Activated CD4-positive, alpha-beta memory T cell treated with anti-CD3 and anti-CD28 coated beads for 36 hours (primary cell): ENCODE measurements at regions of chr4 and their contacts with region 1.

Region 1: GRCh38 chr4:144174401-144175067 is 34.0 kb upstream of the GYPA start:
- DNase-seq: peak; percentile 40
- H3K4me3 Mint-ChIP-seq: no peak overlapping the region
- H3K27ac Mint-ChIP-seq: peak overlapping the region; percentile 70
- H3K4me1 Mint-ChIP-seq: peaks cover 18% of the 10 kb centered on the region
- H3K27me3 Mint-ChIP-seq: peaks cover 3% of the 10 kb centered on the region

Region 2: DNA sequence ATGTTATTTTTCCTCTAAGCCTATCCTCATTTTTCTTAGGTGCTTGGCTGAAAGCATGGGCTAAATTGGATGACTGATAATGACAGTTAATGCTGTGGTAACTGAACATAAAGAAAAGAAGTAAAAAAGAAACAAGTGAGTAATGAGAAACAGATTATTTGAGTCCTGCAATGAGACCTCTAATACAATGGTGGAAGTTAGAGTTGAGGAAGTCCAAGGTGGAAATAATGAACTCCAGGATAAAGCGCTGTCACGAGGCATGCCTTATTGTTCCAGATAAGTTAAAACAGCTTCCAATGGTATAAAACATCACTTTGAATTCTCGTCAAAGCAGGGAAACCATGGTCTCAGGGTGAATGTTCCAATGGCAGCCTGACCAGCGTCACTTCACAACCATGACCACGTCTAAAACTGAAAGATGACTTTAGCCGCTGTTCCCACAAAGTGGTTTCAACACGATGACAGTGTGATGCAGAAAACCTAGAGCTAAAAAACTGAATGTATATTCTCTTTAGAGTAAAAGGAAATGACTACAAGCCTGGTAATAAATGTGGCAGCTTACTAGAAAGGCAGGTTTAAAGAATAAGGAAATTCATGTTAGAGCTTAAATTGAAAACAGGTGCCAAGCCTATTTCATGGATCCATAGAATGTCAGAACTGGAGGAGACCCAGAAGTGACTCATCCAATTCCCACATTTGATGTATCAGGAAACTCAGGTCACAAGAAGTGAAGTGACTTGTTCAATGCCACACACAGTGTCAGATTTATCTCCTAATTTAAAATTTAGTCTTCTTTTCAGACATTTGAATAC is 168.6 kb after region 1 on chr4:
- CTCF ChIA-PET with region 1: no interaction called
- POLR2A ChIA-PET with region 1: no interaction called
- intact Hi-C with region 1: no loop called
- DNase-seq: no peak
- H3K4me3 Mint-ChIP-seq: no peak overlapping the region
- H3K27ac Mint-ChIP-seq: no peak overlapping the region
- H3K4me1 Mint-ChIP-seq: no peaks in the 10 kb centered on the region
- H3K27me3 Mint-ChIP-seq: no peaks in the 10 kb centered on the region

Region 3: GRCh38 chr4:144355809-144356757 is 181.5 kb after region 1 on chr4:
- CTCF ChIA-PET with region 1: no interaction called
- POLR2A ChIA-PET with region 1: no interaction called
- intact Hi-C with region 1: loop called (anchors 10 kb)
- DNase-seq: peak; percentile 15
- H3K4me3 Mint-ChIP-seq: no peak overlapping the region
- H3K27ac Mint-ChIP-seq: no peak overlapping the region
- H3K4me1 Mint-ChIP-seq: no peaks in the 10 kb centered on the region
- H3K27me3 Mint-ChIP-seq: peaks cover 2% of the 10 kb centered on the region

Region 4: DNA sequence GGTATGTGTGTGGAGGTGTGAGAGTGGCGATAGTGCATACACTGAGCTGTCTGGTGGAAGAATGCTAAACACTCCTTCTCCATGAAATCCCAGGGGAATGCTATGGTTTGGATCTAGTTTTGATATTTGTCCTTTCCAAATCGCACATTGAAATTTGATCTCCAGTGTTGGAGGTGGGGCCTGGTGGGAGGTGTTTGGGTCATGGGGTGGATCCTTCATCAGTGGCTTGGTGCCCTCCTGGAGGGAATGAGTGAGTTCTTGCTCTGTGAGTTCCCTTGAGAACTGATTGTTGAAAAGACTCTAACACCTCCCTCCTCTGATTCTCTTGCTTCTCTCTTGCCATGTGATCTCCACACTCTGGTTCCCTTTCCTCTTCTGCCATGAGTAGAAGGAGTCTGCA is 357.3 kb after region 1 on chr4:
- CTCF ChIA-PET with region 1: no interaction called
- POLR2A ChIA-PET with region 1: no interaction called
- intact Hi-C with region 1: no loop called
- DNase-seq: no peak
- H3K4me3 Mint-ChIP-seq: no peak overlapping the region
- H3K27ac Mint-ChIP-seq: no peak overlapping the region
- H3K4me1 Mint-ChIP-seq: no peaks in the 10 kb centered on the region
- H3K27me3 Mint-ChIP-seq: no peaks in the 10 kb centered on the region

Region 5: DNA sequence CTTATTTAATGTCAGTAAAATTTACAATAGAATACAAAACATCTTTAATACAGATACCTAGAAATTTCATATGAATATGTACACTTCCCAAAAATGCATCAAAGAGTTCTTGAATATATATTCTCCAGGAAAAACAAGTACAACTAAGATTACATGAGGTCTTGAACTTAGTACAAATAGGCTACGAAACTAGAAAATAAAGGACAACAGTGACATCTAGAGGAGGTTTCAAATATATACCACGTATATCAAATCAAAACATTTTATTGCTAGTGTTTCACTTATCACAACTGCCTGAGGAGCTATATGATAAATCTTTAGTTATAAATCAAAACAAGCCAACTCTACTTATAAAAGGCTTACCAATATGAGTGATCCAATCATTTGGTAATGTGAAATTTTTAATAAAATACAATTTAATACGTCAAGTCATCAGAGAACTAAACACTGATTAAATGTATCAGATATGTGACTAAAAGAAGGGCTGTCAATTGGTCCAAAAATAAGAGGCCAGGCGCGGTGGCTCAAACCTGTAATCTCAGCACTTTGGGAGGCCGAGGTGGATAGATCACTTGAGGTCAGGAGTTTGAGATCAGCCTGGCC is 886.9 kb after region 1 on chr4:
- CTCF ChIA-PET with region 1: interaction called, 9 read pairs
- POLR2A ChIA-PET with region 1: no interaction called
- intact Hi-C with region 1: loop called (anchors 1 kb)
- DNase-seq: no peak
- H3K4me3 Mint-ChIP-seq: no peak overlapping the region
- H3K27ac Mint-ChIP-seq: no peak overlapping the region
- H3K4me1 Mint-ChIP-seq: peaks cover 17% of the 10 kb centered on the region
- H3K27me3 Mint-ChIP-seq: no peaks in the 10 kb centered on the region

Region 6: DNA sequence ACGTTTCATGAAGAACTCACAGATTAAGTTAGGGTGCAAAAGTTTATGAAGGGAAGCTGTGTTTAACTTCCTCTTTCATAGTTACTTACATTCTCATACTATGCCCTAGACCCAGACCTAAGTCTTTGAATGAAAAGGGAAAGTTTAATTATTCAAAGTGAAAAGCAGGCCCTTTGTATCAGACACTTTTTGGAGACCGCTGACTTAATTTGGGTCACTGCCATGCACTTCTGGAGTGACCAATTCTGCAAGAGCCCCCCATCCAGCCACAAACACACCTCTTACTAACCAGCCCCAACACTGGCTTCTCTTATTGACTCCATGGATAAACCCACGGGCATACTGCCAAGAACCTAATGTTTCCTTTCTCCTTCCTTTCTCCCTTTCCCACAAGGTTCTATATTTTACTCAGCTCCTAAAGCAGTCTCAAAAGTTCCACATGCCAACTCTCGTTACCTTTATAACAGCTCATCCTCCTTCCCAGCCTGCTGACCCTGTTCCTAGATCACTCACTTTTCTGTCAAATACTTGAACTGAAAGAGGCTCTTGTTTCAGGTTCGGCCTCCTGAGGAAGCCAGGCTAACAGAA is 958.1 kb after region 1 on chr4:
- CTCF ChIA-PET with region 1: no interaction called
- POLR2A ChIA-PET with region 1: no interaction called
- intact Hi-C with region 1: loop called (anchors 1 kb)
- DNase-seq: peak; percentile 56
- H3K4me3 Mint-ChIP-seq: no peak overlapping the region
- H3K27ac Mint-ChIP-seq: peak overlapping the region; percentile 52
- H3K4me1 Mint-ChIP-seq: peaks cover 59% of the 10 kb centered on the region
- H3K27me3 Mint-ChIP-seq: no peaks in the 10 kb centered on the region

Region 7: DNA sequence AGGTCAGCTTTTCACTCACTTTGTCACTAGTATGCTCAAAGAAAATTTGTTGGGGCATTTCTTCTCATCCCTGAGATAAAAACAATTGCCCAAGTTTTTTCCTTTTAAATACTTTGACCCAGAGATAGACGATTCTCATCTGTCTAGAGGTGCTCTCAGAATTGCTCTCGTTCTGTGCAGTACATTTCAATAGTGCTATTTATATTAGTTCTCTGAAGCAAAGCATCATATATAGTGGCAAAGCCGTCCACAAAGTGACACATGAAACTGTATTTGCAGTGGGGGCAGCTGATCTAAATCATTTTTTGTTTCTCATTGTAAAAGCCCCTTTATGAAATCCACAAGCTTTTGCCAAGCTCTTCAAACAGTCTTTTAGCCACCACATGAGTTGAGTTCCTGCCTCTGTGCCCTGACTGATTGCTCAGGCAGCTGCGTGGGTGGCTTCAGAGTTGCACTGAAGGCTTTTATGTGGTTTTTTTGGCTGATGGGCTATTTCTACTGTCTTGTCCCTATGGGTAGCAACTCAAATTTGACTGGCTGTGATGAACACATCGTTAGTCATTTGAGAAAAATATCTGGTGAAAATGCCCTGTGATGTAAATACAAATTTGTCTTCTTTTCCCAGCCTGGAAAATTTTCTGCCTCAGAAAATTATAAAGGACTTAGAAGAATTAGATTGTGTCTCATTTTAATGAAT is 1125.0 kb after region 1 on chr4:
- CTCF ChIA-PET with region 1: no interaction called
- POLR2A ChIA-PET with region 1: no interaction called
- intact Hi-C with region 1: loop called (anchors 5 kb)
- DNase-seq: peak; percentile 86
- H3K4me3 Mint-ChIP-seq: no peak overlapping the region
- H3K27ac Mint-ChIP-seq: no peak overlapping the region
- H3K4me1 Mint-ChIP-seq: peaks cover 17% of the 10 kb centered on the region
- H3K27me3 Mint-ChIP-seq: peaks cover 22% of the 10 kb centered on the region

Region 8: GRCh38 chr4:145557720-145558119 is 1383.2 kb after region 1 on chr4:
- CTCF ChIA-PET with region 1: no interaction called
- POLR2A ChIA-PET with region 1: no interaction called
- intact Hi-C with region 1: loop called (anchors 1 kb)
- DNase-seq: peak; percentile 70
- H3K4me3 Mint-ChIP-seq: no peak overlapping the region
- H3K27ac Mint-ChIP-seq: no peak overlapping the region
- H3K4me1 Mint-ChIP-seq: peaks cover under 1% of the 10 kb centered on the region
- H3K27me3 Mint-ChIP-seq: peaks cover 8% of the 10 kb centered on the region